ENCODE measurements at regions of chr2 and their contacts with region 1.

Region 1: GRCh38 chr2:40935349-40935748 is 483.5 kb upstream of the SLC8A1 start:
- DNase-seq: no peak
- ATAC-seq: no peak
- H3K4me3 ChIP-seq: no peak overlapping the region
- H3K27ac ChIP-seq: no peak overlapping the region
- H3K4me1 ChIP-seq: no peaks in the 10 kb centered on the region
- H3K27me3 ChIP-seq: no peaks in the 10 kb centered on the region
- CTCF ChIP-seq: no peak
- POLR2A ChIP-seq: no peak
- RAD21 ChIP-seq: no peak

Region 2: GRCh38 chr2:40975151-40975550 is 39.8 kb after region 1 on chr2:
- CTCF ChIA-PET with region 1: no interaction called
- POLR2A ChIA-PET with region 1: no interaction called
- RAD21 ChIA-PET with region 1: no interaction called
- intact Hi-C with region 1: loop called (anchors 5 kb)
- DNase-seq: no peak
- ATAC-seq: no peak
- H3K4me3 ChIP-seq: no peak overlapping the region
- H3K27ac ChIP-seq: no peak overlapping the region
- H3K4me1 ChIP-seq: no peaks in the 10 kb centered on the region
- H3K27me3 ChIP-seq: no peaks in the 10 kb centered on the region
- CTCF ChIP-seq: no peak
- POLR2A ChIP-seq: no peak
- RAD21 ChIP-seq: no peak

Region 3: DNA sequence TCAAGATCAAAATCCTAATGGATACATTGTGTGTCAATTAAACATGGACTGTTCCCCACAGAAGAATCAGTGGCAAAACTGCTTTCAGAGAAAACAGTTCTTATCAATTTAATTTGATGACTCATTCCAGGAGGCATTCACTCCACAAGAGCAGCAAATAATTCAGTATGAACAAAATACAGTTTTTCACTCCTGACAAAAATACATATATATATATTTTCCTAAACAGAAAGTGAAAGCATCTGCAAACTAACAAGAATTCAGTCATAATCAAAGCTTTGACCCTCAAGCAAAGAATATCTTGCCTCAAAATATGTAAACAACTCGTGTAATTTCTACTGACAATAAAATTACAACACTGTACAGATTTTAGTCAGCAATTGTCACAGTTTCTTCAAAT is 201.7 kb after region 1 on chr2:
- CTCF ChIA-PET with region 1: no interaction called
- POLR2A ChIA-PET with region 1: no interaction called
- RAD21 ChIA-PET with region 1: no interaction called
- intact Hi-C with region 1: no loop called
- DNase-seq: no peak
- ATAC-seq: no peak
- H3K4me3 ChIP-seq: no peak overlapping the region
- H3K27ac ChIP-seq: no peak overlapping the region
- H3K4me1 ChIP-seq: no peaks in the 10 kb centered on the region
- H3K27me3 ChIP-seq: no peaks in the 10 kb centered on the region
- CTCF ChIP-seq: no peak
- POLR2A ChIP-seq: no peak
- RAD21 ChIP-seq: no peak

Region 4: DNA sequence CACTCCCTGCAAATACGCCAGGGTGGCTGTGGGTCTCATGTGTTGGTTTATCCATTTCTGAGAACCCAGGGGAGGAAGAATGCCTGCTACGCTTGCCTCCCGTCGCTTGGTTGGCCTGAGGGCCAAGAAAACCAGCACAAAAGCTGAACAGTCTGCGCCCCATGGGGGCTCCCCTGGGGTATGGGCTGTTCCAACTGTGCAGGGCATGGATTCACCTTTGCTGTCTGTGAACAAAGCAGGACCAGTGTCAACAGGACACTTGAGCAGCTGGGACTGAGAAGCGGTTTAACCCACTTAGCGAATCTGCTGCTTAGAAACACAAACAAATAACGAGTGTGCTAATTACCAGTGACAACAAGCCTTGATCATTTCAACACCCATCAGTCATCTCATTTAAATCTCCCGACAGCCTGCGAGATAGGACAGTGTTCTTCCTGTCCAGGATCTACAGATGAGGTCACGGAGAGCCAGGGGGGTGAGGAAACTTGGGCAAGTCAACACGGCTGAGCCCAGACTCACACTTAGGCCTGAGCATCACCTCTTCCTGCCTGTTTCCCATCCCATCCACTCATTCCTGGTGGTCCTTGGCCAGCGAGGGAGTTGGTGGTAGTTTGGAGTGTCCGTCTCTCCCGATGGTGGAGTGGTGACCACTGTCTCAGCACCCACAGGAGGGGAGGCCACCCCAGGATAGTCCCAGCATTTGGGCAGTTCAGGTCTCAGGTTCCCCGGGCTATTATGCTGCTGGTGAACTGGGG is 1968.6 kb after region 1 on chr2:
- CTCF ChIA-PET with region 1: no interaction called
- POLR2A ChIA-PET with region 1: no interaction called
- RAD21 ChIA-PET with region 1: no interaction called
- intact Hi-C with region 1: no loop called
- DNase-seq: no peak
- ATAC-seq: no peak
- H3K4me3 ChIP-seq: no peak overlapping the region
- H3K27ac ChIP-seq: no peak overlapping the region
- H3K4me1 ChIP-seq: peaks cover 5 to 13% of the 10 kb centered on the region in 2 experiments; a peak in 3 of 4 replicates
- H3K27me3 ChIP-seq: no peaks in the 10 kb centered on the region
- CTCF ChIP-seq: no peak
- POLR2A ChIP-seq: no peak
- RAD21 ChIP-seq: no peak

Measured in HCT116 (cell line).